ENCODE measurements at regions of chr11 and their contacts with region 1.

Region 1: DNA sequence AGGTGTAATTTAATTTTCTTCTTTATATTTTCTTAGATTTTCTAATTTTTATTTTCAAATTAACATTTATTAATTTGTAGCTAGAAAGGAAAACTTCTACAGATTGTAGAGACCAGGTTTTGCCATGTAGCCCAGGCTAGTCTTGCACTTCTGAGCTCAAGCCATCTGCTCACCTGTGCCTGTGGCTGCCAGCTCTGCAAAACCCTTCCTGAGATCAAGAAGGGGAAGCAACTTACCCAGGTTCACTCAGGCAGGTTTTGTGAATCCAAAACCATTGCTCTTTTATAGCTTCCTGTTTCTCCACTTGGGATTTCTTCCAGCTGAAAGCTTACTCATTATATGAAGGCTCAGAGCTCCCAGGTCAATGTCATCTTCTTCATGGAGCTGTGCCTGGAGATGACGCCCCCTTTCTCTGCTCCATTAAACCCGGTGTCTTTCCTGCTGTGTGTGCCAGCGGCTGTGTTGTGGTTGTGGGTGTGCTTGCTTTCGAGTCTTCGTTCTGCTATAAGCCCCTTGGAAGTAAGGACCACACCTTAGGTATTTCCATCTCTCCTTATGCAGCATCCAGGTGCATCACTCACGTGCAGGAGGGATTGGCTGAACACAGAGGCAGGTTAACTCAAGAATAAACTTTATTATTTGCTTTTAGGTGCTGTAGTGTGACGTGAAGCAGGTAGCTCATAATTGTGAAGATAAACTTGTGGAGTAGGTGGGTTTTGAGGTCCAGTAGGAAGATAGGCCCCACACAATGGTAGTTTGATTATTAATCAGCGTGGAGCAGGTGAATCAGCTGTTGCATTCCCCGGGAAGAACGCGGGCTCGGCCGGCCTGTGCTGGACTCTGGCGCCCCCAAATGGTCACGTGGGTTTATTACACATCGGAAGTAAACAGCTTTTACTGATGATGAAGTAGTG is 42.2 kb upstream of the INCENP start:
- DNase-seq: peak; percentile 66
- H3K4me3 Mint-ChIP-seq: no peak overlapping the region
- H3K27ac Mint-ChIP-seq: no peak overlapping the region
- H3K4me1 Mint-ChIP-seq: peaks cover 7% of the 10 kb centered on the region
- H3K27me3 Mint-ChIP-seq: no peaks in the 10 kb centered on the region
- CTCF ChIP-seq: peak; percentile 87

Region 2: GRCh38 chr11:61885166-61885778 is 196.4 kb before region 1 on chr11:
- CTCF ChIA-PET with region 1: interaction called, 10 read pairs
- POLR2A ChIA-PET with region 1: interaction called, 3 read pairs
- intact Hi-C with region 1: no loop called
- DNase-seq: no peak
- H3K4me3 Mint-ChIP-seq: no peak overlapping the region
- H3K27ac Mint-ChIP-seq: no peak overlapping the region
- H3K4me1 Mint-ChIP-seq: peaks cover 31% of the 10 kb centered on the region
- H3K27me3 Mint-ChIP-seq: no peaks in the 10 kb centered on the region
- CTCF ChIP-seq: no peak

Region 3: GRCh38 chr11:61928606-61929005 is 153.0 kb before region 1 on chr11:
- CTCF ChIA-PET with region 1: interaction called, 13 read pairs
- POLR2A ChIA-PET with region 1: no interaction called
- intact Hi-C with region 1: no loop called
- DNase-seq: no peak
- H3K4me3 Mint-ChIP-seq: no peak overlapping the region
- H3K27ac Mint-ChIP-seq: no peak overlapping the region
- H3K4me1 Mint-ChIP-seq: no peaks in the 10 kb centered on the region
- H3K27me3 Mint-ChIP-seq: no peaks in the 10 kb centered on the region
- CTCF ChIP-seq: no peak

Region 4: GRCh38 chr11:62061351-62062222 is 20.0 kb before region 1 on chr11:
- CTCF ChIA-PET with region 1: interaction called, 29 read pairs
- POLR2A ChIA-PET with region 1: interaction called, 5 read pairs
- intact Hi-C with region 1: no loop called
- DNase-seq: peak; percentile 32
- H3K4me3 Mint-ChIP-seq: no peak overlapping the region
- H3K27ac Mint-ChIP-seq: no peak overlapping the region
- H3K4me1 Mint-ChIP-seq: no peaks in the 10 kb centered on the region
- H3K27me3 Mint-ChIP-seq: no peaks in the 10 kb centered on the region
- CTCF ChIP-seq: peak; percentile 38

Region 5: GRCh38 chr11:62108017-62108750 is 26.5 kb after region 1 on chr11:
- CTCF ChIA-PET with region 1: interaction called, 57 read pairs
- POLR2A ChIA-PET with region 1: interaction called, 4 read pairs
- intact Hi-C with region 1: no loop called
- DNase-seq: peak; percentile 69
- H3K4me3 Mint-ChIP-seq: no peak overlapping the region
- H3K27ac Mint-ChIP-seq: no peak overlapping the region
- H3K4me1 Mint-ChIP-seq: no peaks in the 10 kb centered on the region
- H3K27me3 Mint-ChIP-seq: no peaks in the 10 kb centered on the region
- CTCF ChIP-seq: peak; percentile 79

Region 6: GRCh38 chr11:62400760-62401159 is 319.1 kb after region 1 on chr11:
- CTCF ChIA-PET with region 1: no interaction called
- POLR2A ChIA-PET with region 1: no interaction called
- intact Hi-C with region 1: no loop called
- DNase-seq: no peak
- H3K4me3 Mint-ChIP-seq: no peak overlapping the region
- H3K27ac Mint-ChIP-seq: no peak overlapping the region
- H3K4me1 Mint-ChIP-seq: no peaks in the 10 kb centered on the region
- H3K27me3 Mint-ChIP-seq: no peaks in the 10 kb centered on the region
- CTCF ChIP-seq: no peak

Measured in MCF 10A (cell line).